H1 (cell line): ENCODE measurements at regions of chr7 and their contacts with region 1.

Region 1: DNA sequence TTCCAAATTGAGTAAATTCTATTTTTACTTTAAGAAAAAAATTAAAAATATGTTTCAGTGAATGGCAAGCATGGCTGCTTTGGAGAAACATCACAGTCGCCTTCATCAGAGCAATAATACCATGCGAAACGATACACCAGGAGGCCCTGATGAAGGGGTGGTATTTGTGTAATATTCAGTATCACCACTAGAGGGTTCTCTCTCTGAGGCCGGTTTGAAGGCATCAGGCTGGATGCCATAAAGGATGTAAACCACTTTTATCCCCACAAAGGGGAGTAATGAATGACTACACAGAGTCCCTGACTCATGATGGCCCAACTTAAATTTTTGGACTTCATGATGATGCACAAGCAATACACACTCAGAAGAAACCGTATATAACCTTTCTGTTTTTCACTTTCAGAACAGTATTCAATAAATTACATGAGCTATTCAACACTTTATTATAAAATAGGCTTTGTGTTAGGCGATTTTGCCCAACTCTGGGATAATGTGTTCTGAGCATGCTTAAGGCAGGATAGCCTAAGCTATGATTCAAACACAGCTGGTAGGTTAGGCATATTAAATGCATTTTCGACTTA is 95.5 kb downstream of the PPP1R17 start:
- DNase-seq: no peak
- H3K4me3 ChIP-seq: no peak overlapping the region
- H3K27ac ChIP-seq: no peak overlapping the region
- H3K4me1 ChIP-seq: no peaks in the 10 kb centered on the region
- H3K27me3 ChIP-seq: peaks cover 5 to 38% (median 27%) of the 10 kb centered on the region in 4 experiments
- CTCF ChIP-seq: peak in 2 of 3 experiments; percentile 81 to 83; a peak in 3 of 4 replicates
- EP300 ChIP-seq: no peak
- POLR2A ChIP-seq: no peak
- RAD21 ChIP-seq: peak; percentile 71 to 74

Region 2: GRCh38 chr7:31763548-31763947 is 19.0 kb before region 1 on chr7:
- CTCF ChIA-PET with region 1: interaction called, 14 read pairs
- POLR2A ChIA-PET with region 1: no interaction called
- DNase-seq: no peak
- H3K4me3 ChIP-seq: no peak overlapping the region
- H3K27ac ChIP-seq: no peak overlapping the region
- H3K4me1 ChIP-seq: peaks cover 0 to 2% (median 0%) of the 10 kb centered on the region in 4 experiments; a peak in 2 of 7 replicates
- H3K27me3 ChIP-seq: peaks cover 48 to 93% (median 79%) of the 10 kb centered on the region in 4 experiments
- CTCF ChIP-seq: peak in 2 of 3 experiments; percentile 42 to 59; a peak in 3 of 4 replicates
- EP300 ChIP-seq: no peak
- POLR2A ChIP-seq: no peak
- RAD21 ChIP-seq: 0 out of 4 replicates have a peak, but pooled peaks of 1 of the 2 experiments have one; percentile 16

Region 3: DNA sequence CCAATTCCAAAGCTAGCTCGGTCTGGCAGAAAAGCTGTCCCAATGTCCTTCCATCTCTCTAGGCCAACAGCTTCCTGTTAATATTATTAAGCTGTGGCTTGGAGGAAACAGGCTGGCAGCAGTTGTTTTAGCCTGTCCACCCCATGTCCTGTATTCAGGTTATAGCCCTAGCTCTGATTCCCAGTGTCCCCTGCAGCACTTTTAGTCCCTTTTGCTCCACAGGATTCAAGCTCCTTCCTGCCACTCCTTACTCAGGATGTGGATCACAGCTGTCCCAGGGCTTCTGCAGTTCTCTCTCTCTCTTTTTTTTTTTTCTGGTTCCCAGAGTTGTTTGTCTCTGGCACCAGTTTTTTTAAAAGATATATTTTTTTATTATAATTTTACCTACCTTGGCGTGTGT is 10.3 kb before region 1 on chr7:
- CTCF ChIA-PET with region 1: interaction called, 13 read pairs
- POLR2A ChIA-PET with region 1: interaction called, 5 read pairs
- DNase-seq: no peak
- H3K4me3 ChIP-seq: no peak overlapping the region
- H3K27ac ChIP-seq: no peak overlapping the region
- H3K4me1 ChIP-seq: peaks cover 0 to 2% (median 0%) of the 10 kb centered on the region in 4 experiments; a peak in 2 of 7 replicates
- H3K27me3 ChIP-seq: peaks cover 68 to 90% (median 84%) of the 10 kb centered on the region in 4 experiments
- CTCF ChIP-seq: no peak
- EP300 ChIP-seq: no peak
- POLR2A ChIP-seq: no peak
- RAD21 ChIP-seq: no peak

Region 4: GRCh38 chr7:32179567-32179966 is 397.1 kb after region 1 on chr7:
- CTCF ChIA-PET with region 1: interaction called, 10 read pairs
- POLR2A ChIA-PET with region 1: no interaction called
- DNase-seq: no peak
- H3K4me3 ChIP-seq: no peak overlapping the region
- H3K27ac ChIP-seq: no peak overlapping the region
- H3K4me1 ChIP-seq: peaks cover 0 to 4% (median 2%) of the 10 kb centered on the region in 4 experiments; a peak in 2 of 7 replicates
- H3K27me3 ChIP-seq: no peaks in the 10 kb centered on the region
- CTCF ChIP-seq: no peak
- EP300 ChIP-seq: no peak
- POLR2A ChIP-seq: no peak
- RAD21 ChIP-seq: no peak